PC-9 (cell line): ENCODE measurements at regions of chr5 and their contacts with region 1.

Region 1: GRCh38 chr5:150801117-150801927 is 22.8 kb downstream of the SMIM3 start:
- DNase-seq: peak; percentile 43 to 44
- H3K4me3 ChIP-seq: peak overlapping the region; percentile 7; the same call in 1 of the 2 replicates
- H3K27ac ChIP-seq: no peak overlapping the region
- H3K4me1 ChIP-seq: no peaks in the 10 kb centered on the region
- H3K27me3 ChIP-seq: peaks cover 5% of the 10 kb centered on the region; the same call in 1 of the 2 replicates
- CTCF ChIP-seq: peak; percentile 73

Region 2: DNA sequence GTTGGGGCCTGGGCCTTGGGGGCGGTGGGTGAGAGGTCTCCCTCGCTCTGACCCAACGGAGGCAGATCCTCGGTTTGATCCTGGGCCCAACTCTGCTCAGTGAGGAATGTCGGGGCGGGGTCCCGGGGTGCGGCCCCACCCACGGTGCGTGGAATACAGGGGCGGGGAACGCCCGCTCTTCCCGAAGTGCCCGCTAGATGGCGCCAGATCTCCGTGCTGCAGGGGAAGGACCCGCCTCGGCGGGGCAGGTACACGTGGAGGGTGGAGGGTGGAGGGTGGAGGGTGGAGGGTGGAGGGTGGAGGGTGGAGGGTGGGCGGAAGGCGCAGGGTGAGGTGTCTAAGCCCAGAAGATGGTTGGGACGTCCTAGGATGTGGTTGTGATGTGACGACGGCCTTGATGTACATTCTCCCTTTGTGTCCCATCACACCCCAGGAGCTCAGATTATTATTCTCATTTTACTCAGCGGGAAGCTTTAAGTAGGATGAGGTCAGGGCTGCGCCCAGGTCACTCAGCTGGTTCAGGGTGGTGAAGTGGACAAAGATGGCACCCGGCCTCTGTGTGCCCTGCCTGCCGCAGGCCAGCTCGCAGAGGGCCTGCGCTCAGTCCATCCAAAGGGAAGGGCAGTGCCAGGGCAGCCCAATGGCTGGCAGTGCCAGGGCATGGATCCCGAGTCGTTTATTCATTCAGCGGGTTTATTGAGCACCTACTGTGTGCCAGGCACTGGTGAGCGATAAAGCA is 342.3 kb before region 1 on chr5:
- CTCF ChIA-PET with region 1: interaction called, 11 read pairs
- POLR2A ChIA-PET with region 1: no interaction called
- intact Hi-C with region 1: loop called (anchors 10 kb)
- DNase-seq: peak in 1 of 2 experiments; percentile 90
- H3K4me3 ChIP-seq: no peak overlapping the region
- H3K27ac ChIP-seq: no peak overlapping the region
- H3K4me1 ChIP-seq: 0 out of 2 replicates have a peak, but pooled peaks cover 10% of the 10 kb centered on the region
- H3K27me3 ChIP-seq: no peaks in the 10 kb centered on the region
- CTCF ChIP-seq: peak; percentile 80

Region 3: GRCh38 chr5:150778517-150779396 is 22.6 kb before region 1 on chr5 and contains the start of gene SMIM3:
- CTCF ChIA-PET with region 1: interaction called, 16 read pairs
- POLR2A ChIA-PET with region 1: no interaction called
- intact Hi-C with region 1: no loop called
- DNase-seq: peak; percentile 55 to 83
- H3K4me3 ChIP-seq: peak within 1 kb of the TSS; percentile 73
- H3K27ac ChIP-seq: no peak within 1 kb of the TSS
- H3K4me1 ChIP-seq: peaks cover 36% of the 10 kb centered on the region
- H3K27me3 ChIP-seq: no peaks in the 10 kb centered on the region
- CTCF ChIP-seq: peak; percentile 35; the same call in 1 of the 2 replicates
- total RNA-seq, gene SMIM3: 11.5 and 12.1 TPM in 2 replicates

Region 4: DNA sequence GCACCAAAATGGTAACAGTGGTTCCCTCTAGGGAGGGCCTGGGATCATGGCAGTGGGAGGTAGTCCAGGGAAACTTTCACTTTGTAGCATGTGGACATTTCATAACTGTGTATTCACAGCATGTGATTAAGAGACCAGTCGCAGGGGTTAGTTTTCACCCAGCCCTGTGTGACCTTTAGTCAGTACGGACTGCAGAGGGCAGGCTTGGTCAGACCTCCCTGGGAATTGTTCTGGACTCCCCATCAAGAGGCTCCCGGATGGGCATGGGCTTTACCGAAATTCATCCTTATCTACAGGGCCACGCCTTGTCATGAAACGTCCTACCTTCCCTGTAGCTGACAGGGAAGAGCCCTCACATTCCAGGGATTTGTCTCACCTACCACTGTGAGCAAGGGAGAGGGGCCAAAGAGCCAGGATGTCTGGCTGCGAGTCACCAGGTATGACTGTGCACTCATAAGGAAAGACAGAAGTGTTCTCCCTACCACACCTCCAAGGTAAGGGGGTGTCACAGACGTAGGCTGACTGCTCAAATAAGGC is 239.0 kb after region 1 on chr5:
- CTCF ChIA-PET with region 1: no interaction called
- POLR2A ChIA-PET with region 1: no interaction called
- intact Hi-C with region 1: loop called (anchors 5 kb)
- DNase-seq: peak; percentile 63 to 85
- H3K4me3 ChIP-seq: no peak overlapping the region
- H3K27ac ChIP-seq: peak overlapping the region; percentile 89
- H3K4me1 ChIP-seq: peaks cover 47% of the 10 kb centered on the region
- H3K27me3 ChIP-seq: no peaks in the 10 kb centered on the region
- CTCF ChIP-seq: no peak

Region 5: GRCh38 chr5:151164686-151165392 is 363.5 kb after region 1 on chr5:
- CTCF ChIA-PET with region 1: no interaction called
- POLR2A ChIA-PET with region 1: no interaction called
- intact Hi-C with region 1: loop called (anchors 1 kb)
- DNase-seq: peak; percentile 59 to 81
- H3K4me3 ChIP-seq: no peak overlapping the region
- H3K27ac ChIP-seq: no peak overlapping the region
- H3K4me1 ChIP-seq: no peaks in the 10 kb centered on the region
- H3K27me3 ChIP-seq: peaks cover 6% of the 10 kb centered on the region; the same call in 1 of the 2 replicates
- CTCF ChIP-seq: peak; percentile 90

Region 6: GRCh38 chr5:151315998-151316597 is 514.8 kb after region 1 on chr5:
- CTCF ChIA-PET with region 1: no interaction called
- POLR2A ChIA-PET with region 1: no interaction called
- intact Hi-C with region 1: loop called (anchors 5 kb)
- DNase-seq: peak; percentile 55 to 78
- H3K4me3 ChIP-seq: no peak overlapping the region
- H3K27ac ChIP-seq: no peak overlapping the region
- H3K4me1 ChIP-seq: no peaks in the 10 kb centered on the region
- H3K27me3 ChIP-seq: peaks cover 7% of the 10 kb centered on the region; the same call in 1 of the 2 replicates
- CTCF ChIP-seq: peak; percentile 91